ENCODE measurements at regions of chr3 and their contacts with region 1.

Region 1: GRCh38 chr3:10219737-10220136 is 28.5 kb upstream of the TATDN2 start:
- DNase-seq: no peak
- ATAC-seq: no peak
- H3K4me3 ChIP-seq: no peak overlapping the region
- H3K27ac ChIP-seq: no peak overlapping the region
- H3K4me1 ChIP-seq: peaks cover 8% of the 10 kb centered on the region
- H3K27me3 ChIP-seq: no peaks in the 10 kb centered on the region
- CTCF ChIP-seq: no peak
- POLR2A ChIP-seq: no peak
- RAD21 ChIP-seq: no peak

Region 2: GRCh38 chr3:10115326-10116137 is 104.2 kb before region 1 on chr3 and contains the start of gene BRK1:
- CTCF ChIA-PET with region 1: no interaction called
- POLR2A ChIA-PET with region 1: interaction called, 13 read pairs
- dilution Hi-C with region 1: no loop called
- in situ Hi-C with region 1: no loop called
- intact Hi-C with region 1: no loop called
- DNase-seq: peak; percentile 97
- ATAC-seq: peak; percentile 98
- H3K4me3 ChIP-seq: peak within 1 kb of the TSS; percentile 72
- H3K27ac ChIP-seq: peak within 1 kb of the TSS; percentile 95
- H3K4me1 ChIP-seq: peaks cover 2% of the 10 kb centered on the region; the same call in 1 of the 2 replicates
- H3K27me3 ChIP-seq: no peaks in the 10 kb centered on the region
- CTCF ChIP-seq: no peak
- POLR2A ChIP-seq: peak; percentile 87
- RAD21 ChIP-seq: no peak
- total RNA-seq, gene BRK1: 81.4 and 123 TPM in 2 replicates

Measured in IMR-90 (cell line).